ENCODE measurements at regions of chr3 and their contacts with region 1.

Region 1: GRCh38 chr3:61601831-61602230 is 40.5 kb downstream of the PTPRG start:
- DNase-seq: no peak
- H3K4me3 ChIP-seq: no peak overlapping the region
- CTCF ChIP-seq: no peak

Region 2: GRCh38 chr3:61612211-61613194 is 10.7 kb after region 1 on chr3:
- CTCF ChIA-PET with region 1: interaction called, 10 read pairs
- POLR2A ChIA-PET with region 1: no interaction called
- DNase-seq: no peak
- H3K4me3 ChIP-seq: no peak overlapping the region
- CTCF ChIP-seq: no peak

Measured in AG04449 (cell line).